ENCODE measurements at regions of chr11 and their contacts with region 1.

Region 1: GRCh38 chr11:63851364-63851763 is 12.5 kb downstream of the MARK2 start:
- DNase-seq: no peak
- ATAC-seq: no peak
- H3K4me3 ChIP-seq: peak overlapping the region; percentile 17
- H3K4me3 Mint-ChIP-seq: peak overlapping the region; percentile 58 to 83 (median 78)
- H3K27ac ChIP-seq: peak overlapping the region; percentile 59
- H3K27ac Mint-ChIP-seq: peak overlapping the region; percentile 57 to 90 (median 87)
- H3K4me1 ChIP-seq: peaks cover 42 to 46% of the 10 kb centered on the region in 2 donors
- H3K4me1 Mint-ChIP-seq: peaks cover 58 to 85% (median 76%) of the 10 kb centered on the region in 7 donors
- H3K27me3 ChIP-seq: no peaks in the 10 kb centered on the region
- H3K27me3 Mint-ChIP-seq: no peaks in the 10 kb centered on the region

Region 2: DNA sequence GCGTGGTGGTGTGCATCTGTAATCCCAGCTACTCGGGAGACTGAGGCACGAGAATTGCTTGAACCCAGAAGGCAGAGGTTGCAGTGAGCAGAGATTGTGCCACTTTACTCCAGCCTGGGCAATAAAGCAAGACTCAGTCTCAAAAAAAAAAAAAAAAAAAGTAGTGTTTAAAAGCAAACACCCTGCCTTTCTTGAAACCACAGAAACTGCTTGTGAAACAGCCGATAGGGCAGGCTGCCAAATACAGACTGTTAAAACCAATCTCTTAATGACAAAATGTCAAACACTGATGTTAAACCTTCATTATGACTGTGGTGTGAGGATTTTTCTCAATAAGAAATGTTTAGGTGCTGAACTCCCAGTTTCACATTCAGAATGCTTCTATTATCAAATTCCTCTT is 14.8 kb after region 1 on chr11:
- CTCF ChIA-PET with region 1: interaction called, 3 read pairs
- POLR2A ChIA-PET with region 1: interaction called, 4 read pairs
- intact Hi-C with region 1: loop called in 1 of 2 experiments (anchors 2 kb)
- DNase-seq: peak; percentile 29 to 87 (median 80)
- ATAC-seq: peak; percentile 83
- H3K4me3 ChIP-seq: no peak overlapping the region
- H3K4me3 Mint-ChIP-seq: peak overlapping the region; percentile 56 to 81 (median 75)
- H3K27ac ChIP-seq: peak overlapping the region; percentile 22
- H3K27ac Mint-ChIP-seq: peak overlapping the region; percentile 63 to 94 (median 83)
- H3K4me1 ChIP-seq: peaks cover 73% of the 10 kb centered on the region in 2 donors
- H3K4me1 Mint-ChIP-seq: peaks cover 69 to 85% (median 75%) of the 10 kb centered on the region in 7 donors
- H3K27me3 ChIP-seq: no peaks in the 10 kb centered on the region
- H3K27me3 Mint-ChIP-seq: no peaks in the 10 kb centered on the region

Region 3: GRCh38 chr11:63896071-63896470 is 44.7 kb after region 1 on chr11:
- CTCF ChIA-PET with region 1: no interaction called
- POLR2A ChIA-PET with region 1: no interaction called
- intact Hi-C with region 1: no loop called
- DNase-seq: no peak
- ATAC-seq: no peak
- H3K4me3 ChIP-seq: no peak overlapping the region
- H3K4me3 Mint-ChIP-seq: peak overlapping the region in 1 of 10 donors; percentile 16
- H3K27ac ChIP-seq: no peak overlapping the region
- H3K27ac Mint-ChIP-seq: peak overlapping the region in 7 of 9 donors; percentile 19 to 87 (median 69)
- H3K4me1 ChIP-seq: peaks cover 20% of the 10 kb centered on the region in 2 donors
- H3K4me1 Mint-ChIP-seq: peaks cover 23 to 52% (median 44%) of the 10 kb centered on the region in 7 donors
- H3K27me3 ChIP-seq: no peaks in the 10 kb centered on the region
- H3K27me3 Mint-ChIP-seq: no peaks in the 10 kb centered on the region